Ascending aorta (tissue), 2 donors: ENCODE measurements at regions of chr17 and their contacts with region 1.

Region 1: GRCh38 chr17:59786536-59787319 is 79.3 kb downstream of the VMP1 start:
- DNase-seq: peak; percentile 35 to 88
- H3K4me3 ChIP-seq: peak overlapping the region; percentile 20 to 52
- H3K27ac ChIP-seq: peak overlapping the region; percentile 77 to 88
- H3K4me1 ChIP-seq: peaks cover 7 to 50% of the 10 kb centered on the region in 2 donors
- H3K27me3 ChIP-seq: no peaks in the 10 kb centered on the region
- CTCF ChIP-seq: no peak

Region 2: DNA sequence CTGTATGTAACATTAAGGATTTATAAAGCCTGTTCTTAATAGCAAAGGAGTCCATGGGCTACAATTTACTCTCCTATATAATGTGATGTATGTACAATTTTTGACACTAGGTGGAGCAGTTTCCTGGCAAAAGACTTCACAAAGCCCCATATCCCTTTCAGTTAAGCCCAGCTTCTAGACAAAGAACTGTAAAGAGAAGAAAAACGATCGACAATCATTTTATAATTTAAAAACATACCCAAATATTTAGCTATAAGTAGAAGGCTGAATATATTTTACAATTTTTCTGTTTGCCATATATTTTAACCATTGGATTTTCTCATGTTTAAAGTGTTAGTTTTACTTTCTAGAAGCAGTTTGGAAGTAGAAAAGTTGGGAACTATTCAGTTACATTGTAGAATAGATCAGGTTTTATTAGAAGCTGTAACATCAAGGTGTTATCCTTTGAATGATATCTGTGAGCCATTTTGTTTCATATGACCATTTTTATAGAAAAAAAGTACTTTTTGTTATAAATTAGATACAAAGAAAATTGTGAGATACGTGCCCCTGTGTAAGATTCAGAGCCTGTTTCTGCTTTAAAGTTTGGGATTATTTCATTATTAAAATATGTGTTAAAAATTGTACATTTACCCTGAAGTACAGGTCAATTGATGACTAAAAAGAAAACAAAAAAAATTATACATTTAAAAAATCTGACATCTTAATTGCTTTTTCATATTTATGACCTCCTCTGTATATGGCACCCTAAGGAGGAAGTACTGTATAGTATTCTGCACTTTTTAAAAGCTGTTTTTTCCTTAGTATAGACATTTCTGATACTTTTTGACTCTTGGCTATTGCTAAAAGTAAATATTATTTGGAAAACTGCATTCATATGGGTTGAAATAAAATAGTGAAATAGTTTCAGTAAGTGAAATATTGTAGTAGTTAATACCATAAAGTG is 32.9 kb before region 1 on chr17:
- intact Hi-C with region 1: loop called (anchors 5 kb)
- DNase-seq: no peak
- H3K4me3 ChIP-seq: peak overlapping the region in 1 of 2 donors; percentile 30
- H3K27ac ChIP-seq: peak overlapping the region; percentile 56 to 65
- H3K4me1 ChIP-seq: peaks cover 0 to 17% of the 10 kb centered on the region in 2 donors
- H3K27me3 ChIP-seq: no peaks in the 10 kb centered on the region
- CTCF ChIP-seq: peak; percentile 60 to 69 (median 66)

Region 3: GRCh38 chr17:59761705-59762512 is 24.8 kb before region 1 on chr17:
- intact Hi-C with region 1: loop called (anchors 2 kb)
- DNase-seq: no peak
- H3K4me3 ChIP-seq: peak overlapping the region in 1 of 2 donors; percentile 46
- H3K27ac ChIP-seq: peak overlapping the region; percentile 5 to 46
- H3K4me1 ChIP-seq: peaks cover 0 to 22% of the 10 kb centered on the region in 2 donors
- H3K27me3 ChIP-seq: no peaks in the 10 kb centered on the region
- CTCF ChIP-seq: no peak

Region 4: DNA sequence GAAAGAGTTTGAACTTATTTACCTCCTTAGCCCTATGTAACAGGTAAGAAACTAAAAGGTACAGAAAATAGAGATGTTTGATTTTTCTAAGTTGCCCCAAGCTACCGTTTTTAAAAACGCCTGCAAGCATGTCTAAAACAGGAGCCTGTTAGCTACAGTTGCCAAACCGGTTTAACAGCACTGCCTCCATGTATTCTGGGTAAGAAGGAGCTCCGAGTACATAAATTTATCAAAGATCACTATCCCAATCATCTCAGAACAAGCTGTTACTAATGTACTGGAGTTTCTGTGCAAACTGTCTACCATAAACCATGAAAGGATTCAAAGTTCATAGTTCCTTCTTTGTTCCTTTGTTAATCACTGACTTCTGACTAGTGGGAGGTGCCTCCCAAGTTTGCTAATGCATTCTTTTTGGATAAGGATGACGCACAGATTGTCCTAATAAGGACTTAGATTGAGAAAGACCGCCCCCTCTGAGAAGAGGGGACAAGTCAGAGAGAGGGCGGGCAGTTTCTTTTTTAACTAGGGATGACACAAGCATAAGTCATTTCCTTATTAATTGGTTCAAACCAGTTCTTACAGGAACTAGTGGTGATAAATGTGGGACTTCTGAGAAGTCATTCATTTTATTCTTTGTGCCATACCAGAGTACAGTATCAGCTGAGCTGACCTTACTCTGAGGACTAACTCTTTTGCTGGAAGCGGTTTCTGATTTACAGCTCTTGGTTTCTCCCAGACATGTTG is 50.8 kb after region 1 on chr17:
- intact Hi-C with region 1: loop called (anchors 2 kb)
- DNase-seq: peak; percentile 63 to 94
- H3K4me3 ChIP-seq: peak overlapping the region; percentile 55 to 81
- H3K27ac ChIP-seq: peak overlapping the region; percentile 91 to 93
- H3K4me1 ChIP-seq: peaks cover 8 to 15% of the 10 kb centered on the region in 2 donors
- H3K27me3 ChIP-seq: no peaks in the 10 kb centered on the region
- CTCF ChIP-seq: no peak